Spleen (tissue), 13 donors: ENCODE measurements at regions of chr10 and their contacts with region 1.

Region 1: DNA sequence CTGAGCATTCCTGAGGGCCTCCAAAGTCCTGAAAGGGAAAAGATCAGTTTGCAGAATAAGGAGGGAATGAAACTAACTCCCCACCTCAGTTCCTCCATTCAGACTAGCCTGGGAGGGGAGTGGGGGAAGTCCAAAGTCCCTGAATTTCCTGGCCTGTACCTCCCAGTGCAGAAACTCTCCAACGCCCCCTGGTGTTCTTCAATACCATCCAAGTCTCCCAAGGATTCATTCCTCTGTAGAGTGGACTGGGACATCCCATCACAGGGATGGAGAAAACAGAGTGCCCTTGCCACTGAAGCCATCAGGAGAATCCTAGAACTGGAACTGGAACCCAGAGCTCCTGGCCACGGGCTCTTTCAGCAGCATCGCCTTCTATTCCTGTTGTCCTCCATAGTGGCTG is 1.6 kb upstream of the COL13A1 start:
- DNase-seq: no peak
- H3K4me3 ChIP-seq: no peak overlapping the region
- H3K27ac ChIP-seq: no peak overlapping the region
- H3K4me1 ChIP-seq: peaks cover 8 to 35% (median 27%) of the 10 kb centered on the region in 6 donors
- H3K27me3 ChIP-seq: peaks cover 0 to 88% (median 27%) of the 10 kb centered on the region in 7 donors
- CTCF ChIP-seq: peak in 9 of 11 experiments; percentile 35 to 67 (median 55)
- POLR2A ChIP-seq: no peak

Region 2: DNA sequence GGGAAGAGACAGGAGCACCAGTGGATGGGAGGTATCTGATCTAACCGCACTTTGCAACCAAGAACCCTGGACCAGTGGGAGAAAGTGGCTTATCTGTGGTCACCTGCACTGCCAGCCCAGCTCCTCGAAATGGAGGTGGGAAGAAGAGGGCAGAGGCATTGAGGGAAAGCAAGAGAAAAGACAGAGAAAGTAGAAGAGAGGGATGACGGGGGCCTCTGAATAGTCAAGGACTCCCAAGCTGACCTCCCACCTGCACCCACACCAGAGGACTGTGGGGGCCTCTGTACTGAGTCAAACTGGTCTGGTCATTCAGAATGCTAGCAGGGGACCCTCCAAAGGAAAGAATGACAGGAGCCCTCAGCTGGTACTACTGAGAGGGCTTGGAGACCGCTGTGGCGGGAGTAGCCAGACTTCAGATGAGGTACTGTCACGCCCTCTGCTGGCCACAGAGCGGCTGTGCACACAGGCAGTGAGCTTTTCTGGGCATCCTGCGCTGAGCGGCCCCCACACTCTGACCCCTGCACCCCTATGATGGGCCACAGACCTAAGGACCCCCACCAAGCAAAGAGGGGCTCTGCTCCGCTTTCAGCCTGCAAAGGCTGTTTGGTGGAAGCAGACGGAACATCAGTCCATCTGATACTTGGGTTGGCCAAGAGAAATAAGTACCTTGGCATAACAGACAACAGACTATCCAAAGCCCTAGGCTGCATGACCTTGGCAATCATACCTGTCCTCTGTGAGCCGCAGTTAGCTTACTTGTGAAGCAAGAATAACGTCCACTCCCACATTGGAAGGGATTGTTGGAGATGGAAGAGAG is 114.5 kb after region 1 on chr10:
- intact Hi-C with region 1: loop called (anchors 10 kb)
- DNase-seq: peak; percentile 85
- H3K4me3 ChIP-seq: no peak overlapping the region
- H3K27ac ChIP-seq: no peak overlapping the region
- H3K4me1 ChIP-seq: peaks cover 4 to 39% (median 26%) of the 10 kb centered on the region in 6 donors
- H3K27me3 ChIP-seq: peaks cover 0 to 48% (median 0%) of the 10 kb centered on the region in 7 donors
- CTCF ChIP-seq: peak; percentile 56 to 93 (median 85)
- POLR2A ChIP-seq: no peak

Region 3: GRCh38 chr10:70540089-70540788 is 740.1 kb after region 1 on chr10:
- intact Hi-C with region 1: no loop called
- DNase-seq: no peak
- H3K4me3 ChIP-seq: no peak overlapping the region
- H3K27ac ChIP-seq: no peak overlapping the region
- H3K4me1 ChIP-seq: peaks cover 0 to 18% (median 7%) of the 10 kb centered on the region in 6 donors
- H3K27me3 ChIP-seq: no peaks in the 10 kb centered on the region
- CTCF ChIP-seq: peak; percentile 43 to 77 (median 64)
- POLR2A ChIP-seq: no peak